H1 (cell line): ENCODE measurements at regions of chr12 and their contacts with region 1.

Region 1: DNA sequence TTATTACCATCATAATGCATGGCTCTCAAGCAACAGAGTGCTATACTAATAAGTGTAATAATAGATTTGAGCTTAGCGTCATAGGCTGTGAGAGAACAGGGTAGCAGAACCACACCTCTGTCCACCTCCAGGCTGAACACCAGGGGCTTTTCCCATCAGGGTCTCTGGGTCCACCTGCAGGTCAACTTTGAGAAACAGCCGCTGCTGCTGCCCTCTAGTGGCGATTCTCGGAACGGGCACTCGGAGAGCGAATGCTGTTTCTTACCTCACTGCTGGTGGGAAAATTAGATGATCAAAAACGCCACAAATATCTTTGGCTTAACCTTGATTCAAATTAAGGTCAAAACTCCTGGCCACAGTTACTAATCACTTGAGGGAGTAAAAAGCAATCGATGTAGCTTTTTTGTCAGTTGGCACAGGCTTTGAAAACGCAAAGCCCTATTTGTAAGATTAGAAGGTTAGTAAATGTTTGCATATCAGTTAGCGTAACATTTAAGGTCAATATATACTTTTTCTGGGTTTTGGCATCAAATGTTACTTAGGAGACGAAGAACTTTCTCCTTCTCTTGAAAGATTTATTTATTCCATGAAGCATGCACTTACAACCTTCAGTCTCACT is 127.9 kb upstream of the TMEM132D start:
- DNase-seq: peak; percentile 59 to 99
- H3K4me3 ChIP-seq: no peak overlapping the region
- H3K27ac ChIP-seq: no peak overlapping the region
- H3K4me1 ChIP-seq: no peaks in the 10 kb centered on the region
- H3K27me3 ChIP-seq: peaks cover 0 to 15% (median under 1%) of the 10 kb centered on the region in 4 experiments; a peak in 4 of 7 replicates
- CTCF ChIP-seq: peak; percentile 92 to 100 (median 96)
- EP300 ChIP-seq: no peak
- POLR2A ChIP-seq: no peak
- RAD21 ChIP-seq: peak; percentile 72 to 83

Region 2: DNA sequence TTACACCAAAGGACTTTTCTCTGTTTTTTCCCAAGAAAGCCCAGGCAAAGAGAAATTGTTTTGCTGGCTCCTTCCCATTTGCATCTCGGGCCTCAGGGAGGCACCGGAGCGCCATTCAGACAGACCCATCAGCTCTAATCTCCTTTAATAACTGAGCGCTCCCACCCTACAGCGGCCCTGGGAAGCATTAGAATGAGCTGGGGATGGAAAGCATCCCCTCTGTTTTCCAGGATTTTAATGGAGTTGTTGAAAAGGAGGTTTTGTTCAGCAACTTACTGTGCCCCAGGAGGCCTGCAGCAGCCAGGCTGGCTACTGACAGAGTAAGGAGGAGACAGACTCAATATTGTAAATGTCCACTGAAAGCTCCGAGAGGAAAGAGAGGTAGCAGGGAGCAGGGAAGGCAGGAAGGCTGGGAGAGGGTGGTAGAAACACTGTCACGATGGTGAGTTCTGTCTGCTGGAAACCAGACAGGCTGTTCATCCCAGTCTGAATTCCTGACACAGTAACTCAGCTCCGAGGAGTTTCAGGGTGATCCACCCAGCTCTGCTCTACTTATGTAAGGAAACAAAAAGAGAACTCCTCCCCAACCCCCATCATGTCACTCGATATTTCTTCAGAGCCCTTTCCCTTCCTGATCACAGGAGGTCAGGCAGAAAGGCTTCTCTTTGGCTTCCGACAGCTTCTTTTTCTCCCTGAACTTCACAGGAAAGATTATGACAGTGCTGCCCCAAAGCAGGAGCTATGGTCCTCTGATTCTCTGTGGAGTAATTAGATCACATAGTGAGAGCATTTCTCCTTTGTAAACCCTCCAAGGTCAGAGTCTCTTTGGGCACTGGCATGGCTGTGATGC is 65.3 kb before region 1 on chr12:
- CTCF ChIA-PET with region 1: interaction called, 10 read pairs
- POLR2A ChIA-PET with region 1: no interaction called
- DNase-seq: peak; percentile 10 to 53
- H3K4me3 ChIP-seq: no peak overlapping the region; a peak in 2 of 8 replicates
- H3K27ac ChIP-seq: no peak overlapping the region
- H3K4me1 ChIP-seq: peaks cover 0 to 3% (median 0%) of the 10 kb centered on the region in 4 experiments; a peak in 5 of 7 replicates
- H3K27me3 ChIP-seq: peaks cover 0 to 3% (median 0%) of the 10 kb centered on the region in 4 experiments; a peak in 3 of 7 replicates
- CTCF ChIP-seq: peak; percentile 18 to 46 (median 33)
- EP300 ChIP-seq: no peak
- POLR2A ChIP-seq: no peak
- RAD21 ChIP-seq: peak; percentile 55 to 73

Region 3: GRCh38 chr12:130020949-130021440 is 10.7 kb before region 1 on chr12:
- CTCF ChIA-PET with region 1: interaction called, 66 read pairs
- POLR2A ChIA-PET with region 1: no interaction called
- DNase-seq: no peak
- H3K4me3 ChIP-seq: no peak overlapping the region
- H3K27ac ChIP-seq: no peak overlapping the region
- H3K4me1 ChIP-seq: peaks cover 0 to 2% (median under 1%) of the 10 kb centered on the region in 4 experiments; a peak in 2 of 7 replicates
- H3K27me3 ChIP-seq: no peaks in the 10 kb centered on the region; a peak in 2 of 7 replicates
- CTCF ChIP-seq: no peak
- EP300 ChIP-seq: no peak
- POLR2A ChIP-seq: no peak
- RAD21 ChIP-seq: no peak

Region 4: DNA sequence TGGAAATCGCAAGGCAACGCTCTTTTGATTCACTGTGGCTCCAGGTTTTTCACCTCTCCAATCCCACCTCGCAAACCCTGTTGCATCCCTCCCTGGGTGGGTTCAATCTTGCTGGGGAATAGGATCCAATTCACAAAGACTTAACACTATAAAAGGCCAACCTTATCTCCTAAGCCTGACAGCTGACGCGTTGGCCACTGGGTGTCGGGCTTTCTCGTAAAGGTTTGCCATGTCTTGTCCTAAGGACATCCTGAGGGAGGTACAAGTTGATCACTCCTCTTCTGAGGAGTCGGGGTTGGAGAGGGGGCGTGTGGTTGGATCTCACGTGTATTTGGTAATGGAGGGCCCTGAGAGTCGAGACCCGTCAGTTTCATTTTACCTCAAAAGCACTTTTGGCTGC is 18.0 kb after region 1 on chr12:
- CTCF ChIA-PET with region 1: interaction called, 41 read pairs
- POLR2A ChIA-PET with region 1: no interaction called
- DNase-seq: no peak
- H3K4me3 ChIP-seq: no peak overlapping the region
- H3K27ac ChIP-seq: no peak overlapping the region
- H3K4me1 ChIP-seq: peaks cover 0 to 7% (median 3%) of the 10 kb centered on the region in 4 experiments; a peak in 5 of 7 replicates
- H3K27me3 ChIP-seq: peaks cover 10 to 67% (median 50%) of the 10 kb centered on the region in 4 experiments
- CTCF ChIP-seq: peak; percentile 42 to 48 (median 47)
- EP300 ChIP-seq: no peak
- POLR2A ChIP-seq: no peak
- RAD21 ChIP-seq: peak; percentile 41 to 58